PC-9 (cell line): ENCODE measurements at regions of chr2 and their contacts with region 1.

Region 1: DNA sequence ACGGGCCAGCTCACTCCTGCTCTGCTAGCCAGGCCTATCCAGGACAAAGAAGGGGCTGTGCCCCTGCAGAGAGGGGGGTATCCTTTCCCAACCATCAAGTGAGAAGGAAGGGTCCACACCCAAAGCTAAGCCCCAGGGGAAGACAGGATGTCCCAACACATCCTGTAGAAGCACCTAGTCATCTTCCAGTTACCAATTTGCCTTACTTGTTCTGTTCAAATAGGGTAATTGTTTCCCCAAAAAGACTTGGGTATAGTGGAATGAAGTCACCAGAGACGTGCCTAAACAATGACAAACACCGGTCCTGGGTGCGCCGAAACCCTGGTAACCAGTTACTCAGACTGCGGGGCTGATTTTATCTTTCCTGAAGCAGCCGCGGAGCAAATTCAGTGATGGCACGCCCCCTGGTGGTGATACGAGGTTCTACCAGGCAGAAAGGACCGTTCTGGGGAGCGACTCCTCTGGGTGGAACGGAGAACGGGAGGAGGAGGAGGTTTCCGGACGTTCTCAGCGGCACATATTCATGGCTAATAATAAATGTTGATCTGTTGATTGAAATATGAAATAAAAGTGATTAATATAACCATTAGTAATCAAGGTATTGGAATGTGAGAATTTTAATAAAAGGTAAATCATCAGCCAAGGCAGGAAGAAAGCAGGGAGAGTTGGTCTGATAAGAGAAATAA is 109.3 kb upstream of the STON1 start:
- DNase-seq: peak; percentile 95 to 97
- H3K4me3 ChIP-seq: no peak overlapping the region
- H3K27ac ChIP-seq: peak overlapping the region; percentile 64
- H3K4me1 ChIP-seq: peaks cover 12% of the 10 kb centered on the region
- H3K27me3 ChIP-seq: no peaks in the 10 kb centered on the region
- CTCF ChIP-seq: peak; percentile 99

Region 2: GRCh38 chr2:47782671-47783485 is 637.8 kb before region 1 on chr2 and contains the start of gene MSH6:
- CTCF ChIA-PET with region 1: no interaction called
- POLR2A ChIA-PET with region 1: no interaction called
- intact Hi-C with region 1: loop called (anchors 5 kb)
- DNase-seq: peak; percentile 76 to 94
- H3K4me3 ChIP-seq: peak within 1 kb of the TSS; percentile 97
- H3K27ac ChIP-seq: peak within 1 kb of the TSS; percentile 57
- H3K4me1 ChIP-seq: peaks cover 18% of the 10 kb centered on the region
- H3K27me3 ChIP-seq: no peaks in the 10 kb centered on the region
- CTCF ChIP-seq: no peak
- total RNA-seq, gene MSH6: 105 and 123 TPM in 2 replicates

Region 3: GRCh38 chr2:47862949-47863348 is 557.7 kb before region 1 on chr2:
- CTCF ChIA-PET with region 1: no interaction called
- POLR2A ChIA-PET with region 1: no interaction called
- intact Hi-C with region 1: loop called (anchors 5 kb)
- DNase-seq: no peak
- H3K4me3 ChIP-seq: no peak overlapping the region
- H3K27ac ChIP-seq: no peak overlapping the region
- H3K4me1 ChIP-seq: no peaks in the 10 kb centered on the region
- H3K27me3 ChIP-seq: no peaks in the 10 kb centered on the region
- CTCF ChIP-seq: no peak

Region 4: DNA sequence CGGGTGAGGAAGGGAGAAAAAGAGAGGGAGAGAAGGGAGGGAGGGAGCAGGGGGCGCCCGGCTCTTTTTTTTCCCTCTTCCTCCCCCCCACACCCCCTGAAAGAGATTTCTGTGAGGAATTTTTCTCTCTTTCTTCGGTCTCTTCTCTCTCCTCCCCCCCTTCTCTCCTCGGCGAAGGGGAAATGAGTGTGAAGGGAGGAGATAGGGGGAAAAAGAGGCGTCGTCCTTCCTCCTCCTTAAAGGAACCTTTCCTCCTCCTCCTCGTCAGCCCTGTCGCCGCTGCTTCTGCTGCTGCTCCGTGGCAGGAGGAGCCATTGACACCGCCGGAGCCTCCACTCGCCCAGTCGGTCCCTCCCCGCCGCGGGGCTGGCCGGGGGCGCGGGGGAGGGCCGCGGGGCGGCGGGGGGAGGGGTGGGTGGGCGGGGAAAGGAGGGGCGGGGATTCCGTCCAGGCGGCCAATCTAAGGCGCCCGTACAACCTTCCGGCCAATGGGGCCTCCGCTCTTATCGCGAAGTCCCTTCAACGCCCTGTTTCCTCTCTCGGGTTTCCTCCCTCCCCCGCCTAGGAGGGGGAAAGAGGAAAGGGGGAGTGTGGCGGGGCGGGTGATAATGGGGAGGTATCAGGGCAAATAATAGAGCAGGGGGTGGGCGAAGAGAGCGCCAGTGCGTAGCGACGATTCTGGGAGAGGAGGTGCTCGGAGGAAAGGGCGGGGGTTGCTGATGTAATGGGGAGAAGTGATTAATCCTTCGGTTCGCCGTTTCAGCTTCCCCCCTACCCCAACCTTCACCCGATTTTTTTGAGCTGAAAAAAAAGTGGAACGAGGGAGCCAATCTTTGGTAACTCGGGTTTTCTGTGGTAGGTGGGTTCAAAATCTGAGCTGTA is 514.3 kb before region 1 on chr2 and contains the start of gene FBXO11:
- CTCF ChIA-PET with region 1: no interaction called
- POLR2A ChIA-PET with region 1: no interaction called
- intact Hi-C with region 1: loop called (anchors 1 kb)
- DNase-seq: peak; percentile 99
- H3K4me3 ChIP-seq: peak within 1 kb of the TSS; percentile 77
- H3K27ac ChIP-seq: peak within 1 kb of the TSS; percentile 86
- H3K4me1 ChIP-seq: peaks cover 33% of the 10 kb centered on the region
- H3K27me3 ChIP-seq: no peaks in the 10 kb centered on the region
- CTCF ChIP-seq: 0 out of 2 replicates have a peak, but pooled peaks have one; percentile 78
- total RNA-seq, gene FBXO11: 49.3 and 49.4 TPM in 2 replicates

Region 5: DNA sequence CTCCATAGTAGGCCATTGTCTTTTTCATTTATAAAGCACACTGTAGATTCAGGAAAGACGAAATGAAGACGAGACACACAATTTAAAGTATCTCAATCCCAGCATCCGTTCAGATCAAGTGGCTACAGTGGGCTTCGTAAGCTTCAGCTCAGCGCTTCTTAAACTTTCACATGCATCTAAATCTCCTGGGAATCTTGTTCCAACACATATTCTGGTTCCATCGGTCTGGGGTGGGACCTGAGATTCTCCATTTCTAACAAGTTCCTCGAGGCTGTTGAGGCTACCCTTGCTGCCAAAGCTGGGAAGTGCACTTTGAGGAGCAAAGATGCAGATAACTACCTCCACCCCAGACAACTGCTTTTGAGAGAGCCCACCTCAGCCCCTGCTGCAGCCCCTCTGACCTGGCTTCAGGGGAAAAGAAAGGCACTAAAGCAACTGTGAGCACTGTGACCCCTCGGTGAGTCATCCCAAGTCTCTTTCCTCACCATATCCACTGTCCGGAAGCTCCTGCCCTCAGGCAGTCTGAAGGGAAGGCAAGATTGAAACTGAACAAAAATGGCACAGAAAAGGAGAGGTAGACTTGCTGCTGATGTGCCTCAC is 313.2 kb before region 1 on chr2:
- CTCF ChIA-PET with region 1: interaction called, 17 read pairs
- POLR2A ChIA-PET with region 1: no interaction called
- intact Hi-C with region 1: no loop called
- DNase-seq: peak; percentile 64 to 73
- H3K4me3 ChIP-seq: no peak overlapping the region
- H3K27ac ChIP-seq: peak overlapping the region; percentile 71
- H3K4me1 ChIP-seq: peaks cover 53% of the 10 kb centered on the region
- H3K27me3 ChIP-seq: no peaks in the 10 kb centered on the region
- CTCF ChIP-seq: no peak

Region 6: DNA sequence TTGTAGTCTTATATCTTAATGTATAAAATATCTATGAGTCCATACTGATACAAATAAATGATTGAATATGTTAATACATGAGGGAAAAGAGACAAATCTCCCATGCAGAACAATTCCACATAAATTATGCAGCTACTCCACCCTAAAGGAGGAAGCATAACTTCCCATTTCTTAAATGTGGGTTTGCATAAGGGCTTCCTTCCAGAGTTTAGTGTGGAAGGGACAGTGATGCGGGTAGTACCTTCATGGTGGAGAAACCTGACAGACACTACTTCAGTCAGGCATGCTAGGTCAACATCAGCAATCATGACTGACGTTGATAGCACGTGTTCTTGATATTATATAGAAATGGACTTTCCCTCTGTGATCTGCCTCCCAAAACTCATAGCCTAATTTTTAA is 37.6 kb before region 1 on chr2:
- CTCF ChIA-PET with region 1: no interaction called
- POLR2A ChIA-PET with region 1: no interaction called
- intact Hi-C with region 1: no loop called
- DNase-seq: no peak
- H3K4me3 ChIP-seq: no peak overlapping the region
- H3K27ac ChIP-seq: no peak overlapping the region
- H3K4me1 ChIP-seq: no peaks in the 10 kb centered on the region
- H3K27me3 ChIP-seq: no peaks in the 10 kb centered on the region
- CTCF ChIP-seq: no peak

Region 7: GRCh38 chr2:48471048-48471474 is 50.4 kb after region 1 on chr2:
- CTCF ChIA-PET with region 1: no interaction called
- POLR2A ChIA-PET with region 1: no interaction called
- intact Hi-C with region 1: loop called (anchors 2 kb)
- DNase-seq: peak; percentile 22 to 65
- H3K4me3 ChIP-seq: no peak overlapping the region
- H3K27ac ChIP-seq: no peak overlapping the region
- H3K4me1 ChIP-seq: no peaks in the 10 kb centered on the region
- H3K27me3 ChIP-seq: no peaks in the 10 kb centered on the region
- CTCF ChIP-seq: peak; percentile 92

Region 8: GRCh38 chr2:48589170-48589767 is 168.6 kb after region 1 on chr2:
- CTCF ChIA-PET with region 1: no interaction called
- POLR2A ChIA-PET with region 1: no interaction called
- intact Hi-C with region 1: loop called (anchors 1 kb)
- DNase-seq: peak in 1 of 2 experiments; percentile 43
- H3K4me3 ChIP-seq: no peak overlapping the region
- H3K27ac ChIP-seq: no peak overlapping the region
- H3K4me1 ChIP-seq: no peaks in the 10 kb centered on the region
- H3K27me3 ChIP-seq: no peaks in the 10 kb centered on the region
- CTCF ChIP-seq: peak; percentile 95

Region 9: DNA sequence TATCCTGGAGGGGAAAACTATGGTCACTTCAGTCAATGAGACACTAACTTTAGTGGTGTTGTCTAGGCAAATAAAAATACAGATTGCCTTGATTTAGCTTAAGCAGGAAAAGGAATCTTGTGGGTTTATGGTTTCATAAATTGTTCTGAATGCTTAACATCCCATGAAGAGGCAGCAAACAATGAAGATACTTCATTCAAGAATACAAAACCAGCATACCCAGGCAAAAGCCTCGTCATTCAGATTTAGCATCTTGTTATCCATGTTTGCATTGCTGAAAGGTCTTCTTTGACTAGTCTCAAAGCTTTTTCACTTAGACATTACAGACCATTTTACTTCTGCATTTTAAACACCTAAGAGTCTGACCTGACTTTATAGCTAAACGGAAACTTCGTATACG is 1006.3 kb after region 1 on chr2:
- CTCF ChIA-PET with region 1: no interaction called
- POLR2A ChIA-PET with region 1: no interaction called
- intact Hi-C with region 1: no loop called
- DNase-seq: no peak
- H3K4me3 ChIP-seq: no peak overlapping the region
- H3K27ac ChIP-seq: no peak overlapping the region
- H3K4me1 ChIP-seq: no peaks in the 10 kb centered on the region
- H3K27me3 ChIP-seq: no peaks in the 10 kb centered on the region
- CTCF ChIP-seq: no peak